Activated CD8-positive, alpha-beta T cell treated with anti-CD3 and anti-CD28 coated beads, Interleukin-2, amount 10 ng/mL, durations not matched to agents 7 days and 5 days (primary cell): ENCODE measurements at regions of chr6 and their contacts with region 1.

Region 1: GRCh38 chr6:137799950-137800568 is 67.0 kb upstream of the TNFAIP3 start:
- DNase-seq: peak; percentile 75
- ATAC-seq: peak; percentile 74
- H3K4me3 Mint-ChIP-seq: no peak overlapping the region
- H3K27ac Mint-ChIP-seq: peak overlapping the region; percentile 60
- H3K4me1 Mint-ChIP-seq: peaks cover 64% of the 10 kb centered on the region
- H3K27me3 Mint-ChIP-seq: no peaks in the 10 kb centered on the region

Region 2: DNA sequence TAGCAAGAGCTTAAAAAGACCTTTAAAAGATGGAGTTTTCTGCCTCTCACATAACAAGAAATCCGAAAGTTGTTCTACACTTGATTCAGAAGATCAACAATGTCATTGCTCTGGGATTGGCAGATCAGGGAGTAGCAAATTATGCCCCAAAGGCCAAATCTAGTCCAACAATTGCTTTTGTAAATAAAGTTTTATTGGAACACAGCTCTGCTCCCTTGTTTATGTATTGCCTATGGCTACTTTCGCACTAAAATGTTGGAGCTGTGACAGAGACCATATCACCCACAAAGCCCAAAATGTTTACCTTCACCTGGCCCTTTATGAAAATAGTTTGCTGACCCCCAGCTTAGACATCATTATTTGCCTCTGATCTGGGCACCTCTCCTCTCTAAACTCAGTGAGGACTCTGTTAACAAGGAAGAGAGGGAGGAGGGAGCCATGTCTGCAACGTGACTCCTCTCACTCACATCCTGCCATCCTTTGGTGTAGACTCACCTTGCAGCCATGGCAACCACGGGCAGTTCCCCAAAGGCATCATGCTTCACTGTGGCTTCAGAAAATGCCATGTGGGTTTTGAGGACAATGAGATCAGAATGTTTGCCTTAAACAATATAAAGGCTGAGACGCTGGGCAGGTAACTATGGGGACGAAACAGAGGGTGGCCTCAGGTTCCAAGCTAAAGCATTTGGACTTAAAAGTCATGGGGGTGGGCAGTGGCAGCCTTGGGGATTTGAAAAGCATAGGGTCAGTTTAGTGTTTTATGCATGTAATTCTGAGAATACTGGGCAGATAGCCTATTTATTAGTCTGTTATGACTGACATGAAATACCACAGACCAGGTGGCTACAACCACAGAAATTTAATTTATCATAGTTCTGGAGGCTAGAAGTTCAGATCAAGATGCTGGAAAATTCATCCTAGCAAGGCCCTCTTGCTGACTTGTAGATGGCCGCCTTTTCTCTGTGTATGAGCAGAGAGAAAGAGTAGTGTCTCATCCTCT is 82.7 kb before region 1 on chr6:
- CTCF ChIA-PET with region 1: interaction called, 37 read pairs
- POLR2A ChIA-PET with region 1: interaction called, 9 read pairs
- DNase-seq: peak; percentile 88
- ATAC-seq: peak; percentile 72
- H3K4me3 Mint-ChIP-seq: no peak overlapping the region
- H3K27ac Mint-ChIP-seq: peak overlapping the region; percentile 84
- H3K4me1 Mint-ChIP-seq: peaks cover 55% of the 10 kb centered on the region
- H3K27me3 Mint-ChIP-seq: no peaks in the 10 kb centered on the region

Region 3: DNA sequence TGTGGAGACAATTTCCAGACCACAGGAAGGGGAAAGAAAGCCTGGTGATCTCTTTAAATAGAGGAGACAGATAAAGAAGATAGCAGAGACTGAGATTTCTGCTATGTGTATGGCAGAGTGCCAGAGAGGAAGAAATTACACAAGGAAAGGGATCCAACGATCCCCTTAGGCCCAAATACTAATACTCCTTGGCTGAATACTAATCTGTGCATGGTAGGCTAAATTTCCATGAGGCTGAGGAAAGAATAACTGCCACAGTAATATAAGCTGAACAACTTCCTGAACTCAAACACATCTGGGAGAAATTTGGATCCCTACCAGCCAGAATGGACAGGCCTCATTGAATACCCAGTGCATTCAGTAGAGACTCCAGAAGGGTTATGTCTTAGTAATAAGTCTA is 16.3 kb before region 1 on chr6:
- CTCF ChIA-PET with region 1: interaction called, 17 read pairs
- POLR2A ChIA-PET with region 1: no interaction called
- DNase-seq: no peak
- ATAC-seq: no peak
- H3K4me3 Mint-ChIP-seq: no peak overlapping the region
- H3K27ac Mint-ChIP-seq: no peak overlapping the region
- H3K4me1 Mint-ChIP-seq: peaks cover 5% of the 10 kb centered on the region
- H3K27me3 Mint-ChIP-seq: no peaks in the 10 kb centered on the region

Region 4: GRCh38 chr6:137823826-137824555 is 23.9 kb after region 1 on chr6:
- CTCF ChIA-PET with region 1: interaction called, 38 read pairs
- POLR2A ChIA-PET with region 1: interaction called, 20 read pairs
- DNase-seq: peak; percentile 75
- ATAC-seq: peak; percentile 74
- H3K4me3 Mint-ChIP-seq: peak overlapping the region; percentile 70
- H3K27ac Mint-ChIP-seq: peak overlapping the region; percentile 97
- H3K4me1 Mint-ChIP-seq: peaks cover 82% of the 10 kb centered on the region
- H3K27me3 Mint-ChIP-seq: no peaks in the 10 kb centered on the region

Region 5: DNA sequence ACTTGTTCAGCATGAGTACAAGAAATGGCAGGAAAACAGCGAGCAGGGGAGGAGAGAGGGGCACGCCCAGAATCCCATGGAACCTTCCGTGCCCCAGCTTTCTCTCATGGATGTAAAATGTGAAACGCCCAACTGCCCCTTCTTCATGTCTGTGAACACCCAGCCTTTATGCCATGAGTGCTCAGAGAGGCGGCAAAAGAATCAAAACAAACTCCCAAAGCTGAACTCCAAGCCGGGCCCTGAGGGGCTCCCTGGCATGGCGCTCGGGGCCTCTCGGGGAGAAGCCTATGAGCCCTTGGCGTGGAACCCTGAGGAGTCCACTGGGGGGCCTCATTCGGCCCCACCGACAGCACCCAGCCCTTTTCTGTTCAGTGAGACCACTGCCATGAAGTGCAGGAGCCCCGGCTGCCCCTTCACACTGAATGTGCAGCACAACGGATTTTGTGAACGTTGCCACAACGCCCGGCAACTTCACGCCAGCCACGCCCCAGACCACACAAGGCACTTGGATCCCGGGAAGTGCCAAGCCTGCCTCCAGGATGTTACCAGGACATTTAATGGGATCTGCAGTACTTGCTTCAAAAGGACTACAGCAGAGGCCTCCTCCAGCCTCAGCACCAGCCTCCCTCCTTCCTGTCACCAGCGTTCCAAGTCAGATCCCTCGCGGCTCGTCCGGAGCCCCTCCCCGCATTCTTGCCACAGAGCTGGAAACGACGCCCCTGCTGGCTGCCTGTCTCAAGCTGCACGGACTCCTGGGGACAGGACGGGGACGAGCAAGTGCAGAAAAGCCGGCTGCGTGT is 78.6 kb after region 1 on chr6:
- CTCF ChIA-PET with region 1: interaction called, 399 read pairs
- POLR2A ChIA-PET with region 1: no interaction called
- DNase-seq: no peak
- ATAC-seq: no peak
- H3K4me3 Mint-ChIP-seq: no peak overlapping the region
- H3K27ac Mint-ChIP-seq: peak overlapping the region; percentile 46
- H3K4me1 Mint-ChIP-seq: peaks cover 75% of the 10 kb centered on the region
- H3K27me3 Mint-ChIP-seq: no peaks in the 10 kb centered on the region

Region 6: DNA sequence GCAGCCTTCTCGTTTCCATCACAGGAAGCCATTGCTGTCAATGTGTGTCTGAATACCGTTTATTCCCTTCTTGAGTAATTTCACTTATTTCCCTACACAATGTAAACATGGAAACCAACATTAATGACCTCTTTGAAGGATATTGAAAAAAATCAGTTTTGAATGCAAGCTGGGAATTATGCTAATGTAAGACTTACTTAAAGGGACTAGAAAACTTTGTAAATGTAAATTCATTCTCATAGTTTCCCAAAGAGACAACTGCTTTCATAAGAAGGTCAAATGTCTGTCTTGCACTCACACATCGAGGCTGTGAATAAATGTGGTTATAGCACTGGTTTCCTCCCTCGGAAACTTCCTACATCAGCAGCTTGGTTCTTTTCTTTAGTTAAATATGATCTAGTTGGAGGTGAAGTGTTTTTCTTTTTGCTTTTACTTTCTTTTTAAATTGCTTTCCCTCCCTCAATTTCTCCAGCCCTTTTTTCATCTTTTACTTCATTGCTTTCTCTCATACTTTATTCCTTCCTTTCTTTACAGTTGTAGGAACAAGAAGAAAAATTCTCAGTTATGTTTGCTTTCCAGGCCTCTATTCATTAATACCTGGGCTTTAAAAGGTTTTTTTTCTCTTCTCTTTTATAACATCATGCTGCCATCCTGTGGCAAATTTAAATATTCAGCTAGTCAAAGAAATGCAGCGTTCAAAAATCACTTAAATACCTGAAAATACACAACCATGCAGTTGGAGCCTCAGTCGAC is 175.3 kb after region 1 on chr6:
- CTCF ChIA-PET with region 1: interaction called, 26 read pairs
- POLR2A ChIA-PET with region 1: no interaction called
- DNase-seq: peak; percentile 59
- ATAC-seq: peak; percentile 86
- H3K4me3 Mint-ChIP-seq: peak overlapping the region; percentile 76
- H3K27ac Mint-ChIP-seq: peak overlapping the region; percentile 92
- H3K4me1 Mint-ChIP-seq: peaks cover 51% of the 10 kb centered on the region
- H3K27me3 Mint-ChIP-seq: no peaks in the 10 kb centered on the region